Endothelial cell of umbilical vein (primary cell): ENCODE measurements at regions of chr19 and their contacts with region 1.

Region 1: GRCh38 chr19:38004521-38005223 is 97.7 kb downstream of the SIPA1L3 start:
- DNase-seq: peak; percentile 97
- H3K4me3 ChIP-seq: peak overlapping the region in 2 of 3 experiments; percentile 6 to 44
- H3K27ac ChIP-seq: peak overlapping the region; percentile 99
- H3K4me1 ChIP-seq: peaks cover 46% of the 10 kb centered on the region
- H3K27me3 ChIP-seq: no peaks in the 10 kb centered on the region
- CTCF ChIP-seq: no peak
- POLR2A ChIP-seq: peak; percentile 96

Region 2: DNA sequence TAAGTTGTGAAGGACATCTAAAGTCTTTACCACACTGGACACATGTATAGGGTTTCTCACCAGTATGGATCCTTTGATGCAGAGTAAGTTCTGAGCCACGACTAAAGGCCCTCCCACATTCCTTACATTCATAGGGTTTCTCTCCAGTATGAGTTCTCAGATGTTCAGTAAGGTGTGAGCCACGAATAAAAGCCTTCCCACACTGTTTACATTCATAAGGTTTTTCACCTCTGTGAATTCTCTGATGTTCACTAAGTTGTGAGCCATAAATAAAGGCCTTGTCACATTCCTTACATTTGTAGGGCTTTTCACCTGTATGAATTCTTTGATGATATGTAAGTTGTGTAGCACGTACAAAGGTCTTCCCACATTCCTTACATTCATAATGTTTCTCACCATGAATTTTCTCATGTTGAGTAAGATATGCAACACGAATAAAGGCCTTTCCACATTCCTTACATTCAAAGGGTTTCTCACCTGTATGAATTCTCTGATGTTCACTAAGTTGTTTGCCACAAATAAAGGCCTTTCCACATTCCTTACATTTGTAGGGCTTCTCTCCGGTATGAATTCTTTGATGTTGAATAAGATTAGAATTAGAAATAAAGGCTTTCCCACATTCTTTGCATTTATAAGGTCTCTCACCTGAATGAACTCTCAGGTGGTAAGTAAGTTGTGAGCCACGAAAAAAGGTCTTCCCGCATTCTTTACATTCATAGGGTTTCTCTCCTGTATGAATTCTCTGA is 439.9 kb before region 1 on chr19:
- CTCF ChIA-PET with region 1: no interaction called
- POLR2A ChIA-PET with region 1: no interaction called
- dilution Hi-C with region 1: no loop called
- intact Hi-C with region 1: no loop called
- DNase-seq: peak; percentile 2
- H3K4me3 ChIP-seq: no peak overlapping the region
- H3K27ac ChIP-seq: no peak overlapping the region
- H3K4me1 ChIP-seq: no peaks in the 10 kb centered on the region
- H3K27me3 ChIP-seq: no peaks in the 10 kb centered on the region
- CTCF ChIP-seq: no peak
- POLR2A ChIP-seq: no peak

Region 3: DNA sequence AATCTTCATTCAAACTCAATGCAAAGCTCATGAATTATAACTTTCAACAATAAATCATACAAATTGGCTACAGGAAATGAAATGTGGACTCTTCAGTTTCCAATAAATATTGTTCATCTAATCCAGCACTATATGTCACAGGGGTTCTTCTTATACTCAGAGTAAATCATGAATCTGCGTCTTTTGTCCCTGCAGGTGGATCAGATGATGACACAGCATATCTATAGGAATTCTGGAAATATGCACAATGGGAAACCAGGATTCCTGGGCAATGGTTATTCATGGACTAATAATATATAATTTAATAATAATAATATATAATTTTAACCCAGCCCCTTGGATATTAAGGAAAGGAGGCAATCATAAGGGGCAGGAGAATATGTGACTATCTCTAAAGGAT is 233.7 kb before region 1 on chr19:
- CTCF ChIA-PET with region 1: no interaction called
- POLR2A ChIA-PET with region 1: no interaction called
- dilution Hi-C with region 1: no loop called
- intact Hi-C with region 1: no loop called
- DNase-seq: no peak
- H3K4me3 ChIP-seq: no peak overlapping the region
- H3K27ac ChIP-seq: no peak overlapping the region
- H3K4me1 ChIP-seq: no peaks in the 10 kb centered on the region
- H3K27me3 ChIP-seq: no peaks in the 10 kb centered on the region
- CTCF ChIP-seq: no peak
- POLR2A ChIP-seq: no peak

Region 4: DNA sequence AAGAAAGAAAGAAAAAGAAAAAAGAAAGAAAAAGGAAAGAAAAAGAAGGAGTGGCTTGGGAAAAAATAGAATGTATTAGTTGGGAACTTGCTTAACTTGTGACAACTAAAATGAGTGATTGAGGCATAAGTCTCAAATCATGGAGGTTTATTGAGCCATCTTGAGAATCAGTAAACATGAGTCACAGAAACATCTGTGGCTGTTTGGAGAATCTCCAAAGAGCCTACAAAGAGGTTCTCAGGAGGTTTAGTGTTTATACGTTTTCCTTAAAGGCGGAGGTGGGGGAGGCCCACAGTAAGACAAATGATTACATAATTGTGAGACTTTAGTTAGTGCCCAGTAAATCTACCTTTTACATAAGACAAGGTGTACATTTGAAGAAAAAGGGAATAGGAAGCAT is 136.8 kb before region 1 on chr19:
- CTCF ChIA-PET with region 1: no interaction called
- POLR2A ChIA-PET with region 1: no interaction called
- dilution Hi-C with region 1: no loop called
- intact Hi-C with region 1: no loop called
- DNase-seq: no peak
- H3K4me3 ChIP-seq: no peak overlapping the region
- H3K27ac ChIP-seq: no peak overlapping the region
- H3K4me1 ChIP-seq: no peaks in the 10 kb centered on the region
- H3K27me3 ChIP-seq: no peaks in the 10 kb centered on the region
- CTCF ChIP-seq: no peak
- POLR2A ChIP-seq: no peak

Region 5: DNA sequence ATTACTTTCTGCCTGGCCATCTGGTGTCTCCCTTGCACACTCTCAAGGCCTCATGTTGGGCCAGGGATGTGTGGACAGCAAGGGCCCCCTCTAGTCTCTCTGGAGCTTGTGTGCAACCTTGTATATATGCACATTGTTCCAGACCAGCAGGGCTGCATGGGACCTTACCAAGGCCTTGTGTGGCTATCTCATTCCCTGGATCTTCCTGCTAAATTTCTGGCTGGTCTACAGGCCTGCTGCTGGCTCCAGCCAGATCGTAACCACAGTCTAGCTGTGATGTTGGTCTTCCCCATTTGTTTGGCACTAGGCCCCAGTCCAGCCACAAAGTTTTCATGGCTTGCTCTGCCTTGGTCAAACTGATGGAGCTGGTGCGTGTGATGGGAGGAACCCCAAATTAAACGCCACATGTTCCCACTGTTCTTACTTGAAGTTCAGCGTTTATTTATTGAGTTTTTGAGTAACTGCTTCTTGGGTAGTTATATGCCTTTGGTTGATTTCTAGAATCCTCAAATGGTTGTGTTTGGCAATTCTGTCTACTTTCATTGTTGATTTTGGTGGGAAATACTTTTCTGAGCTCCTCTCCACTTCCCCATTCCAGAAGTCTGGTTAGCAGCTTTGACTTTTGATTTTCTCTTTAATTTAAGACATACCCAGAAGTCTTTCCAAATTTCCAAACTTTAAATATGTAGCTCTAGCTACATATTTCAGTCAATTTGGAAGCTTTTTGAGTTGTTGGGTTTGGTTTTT is 41.3 kb before region 1 on chr19:
- CTCF ChIA-PET with region 1: interaction called, 5 read pairs
- POLR2A ChIA-PET with region 1: interaction called, 7 read pairs
- dilution Hi-C with region 1: no loop called
- intact Hi-C with region 1: loop called (anchors 2 kb)
- DNase-seq: peak; percentile 29
- H3K4me3 ChIP-seq: no peak overlapping the region
- H3K27ac ChIP-seq: no peak overlapping the region
- H3K4me1 ChIP-seq: peaks cover 18% of the 10 kb centered on the region
- H3K27me3 ChIP-seq: no peaks in the 10 kb centered on the region
- CTCF ChIP-seq: no peak
- POLR2A ChIP-seq: no peak

Region 6: DNA sequence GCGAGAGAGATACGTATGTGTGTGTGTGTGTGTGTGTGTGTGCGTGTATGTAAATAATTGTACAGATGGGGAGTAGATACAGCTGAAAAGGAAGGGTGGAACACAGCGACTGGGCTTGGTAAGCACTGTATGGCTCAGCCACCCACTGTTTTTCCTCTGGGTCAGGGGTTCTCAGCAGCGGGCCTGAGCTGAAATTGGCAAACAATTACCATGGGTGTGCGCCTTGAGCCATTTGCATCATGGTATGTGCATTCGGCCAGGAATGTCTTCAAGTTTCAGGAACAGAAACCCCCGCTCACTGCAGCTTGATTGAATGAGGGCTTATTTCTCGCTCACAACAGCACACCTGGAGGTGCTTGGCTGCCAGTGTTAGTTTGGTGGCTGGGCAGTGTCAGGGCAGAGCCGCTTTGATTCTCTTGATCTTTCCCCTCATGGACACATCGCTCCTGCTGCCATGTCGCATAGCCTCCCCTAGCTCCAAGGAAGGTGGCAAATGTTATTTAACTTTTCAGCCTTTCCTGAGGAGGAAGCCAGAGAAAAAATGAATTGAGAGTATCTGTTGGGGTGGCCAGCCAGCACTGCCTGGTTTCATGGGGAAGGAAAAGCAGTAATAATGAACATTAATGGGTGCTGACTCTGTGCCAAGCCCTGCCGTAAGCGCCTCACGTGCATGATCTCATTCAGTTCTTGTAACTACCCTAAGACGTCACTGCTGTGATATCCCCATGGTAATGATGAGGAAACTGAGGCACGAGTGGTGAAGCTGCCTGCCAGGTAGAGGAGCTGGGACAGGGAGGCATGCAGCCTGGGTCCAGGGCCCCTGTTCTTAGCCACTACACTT is 29.2 kb after region 1 on chr19:
- CTCF ChIA-PET with region 1: interaction called, 3 read pairs
- POLR2A ChIA-PET with region 1: no interaction called
- dilution Hi-C with region 1: no loop called
- intact Hi-C with region 1: loop called (anchors 1 kb)
- DNase-seq: no peak
- H3K4me3 ChIP-seq: no peak overlapping the region
- H3K27ac ChIP-seq: no peak overlapping the region
- H3K4me1 ChIP-seq: peaks cover 12% of the 10 kb centered on the region
- H3K27me3 ChIP-seq: no peaks in the 10 kb centered on the region
- CTCF ChIP-seq: no peak
- POLR2A ChIP-seq: no peak

Region 7: GRCh38 chr19:38061294-38061693 is 56.6 kb after region 1 on chr19:
- CTCF ChIA-PET with region 1: interaction called, 5 read pairs
- POLR2A ChIA-PET with region 1: interaction called, 7 read pairs
- dilution Hi-C with region 1: no loop called
- intact Hi-C with region 1: loop called (anchors 1 kb)
- DNase-seq: no peak
- H3K4me3 ChIP-seq: no peak overlapping the region
- H3K27ac ChIP-seq: peak overlapping the region; percentile 42
- H3K4me1 ChIP-seq: peaks cover 22% of the 10 kb centered on the region
- H3K27me3 ChIP-seq: no peaks in the 10 kb centered on the region
- CTCF ChIP-seq: no peak
- POLR2A ChIP-seq: no peak

Region 8: DNA sequence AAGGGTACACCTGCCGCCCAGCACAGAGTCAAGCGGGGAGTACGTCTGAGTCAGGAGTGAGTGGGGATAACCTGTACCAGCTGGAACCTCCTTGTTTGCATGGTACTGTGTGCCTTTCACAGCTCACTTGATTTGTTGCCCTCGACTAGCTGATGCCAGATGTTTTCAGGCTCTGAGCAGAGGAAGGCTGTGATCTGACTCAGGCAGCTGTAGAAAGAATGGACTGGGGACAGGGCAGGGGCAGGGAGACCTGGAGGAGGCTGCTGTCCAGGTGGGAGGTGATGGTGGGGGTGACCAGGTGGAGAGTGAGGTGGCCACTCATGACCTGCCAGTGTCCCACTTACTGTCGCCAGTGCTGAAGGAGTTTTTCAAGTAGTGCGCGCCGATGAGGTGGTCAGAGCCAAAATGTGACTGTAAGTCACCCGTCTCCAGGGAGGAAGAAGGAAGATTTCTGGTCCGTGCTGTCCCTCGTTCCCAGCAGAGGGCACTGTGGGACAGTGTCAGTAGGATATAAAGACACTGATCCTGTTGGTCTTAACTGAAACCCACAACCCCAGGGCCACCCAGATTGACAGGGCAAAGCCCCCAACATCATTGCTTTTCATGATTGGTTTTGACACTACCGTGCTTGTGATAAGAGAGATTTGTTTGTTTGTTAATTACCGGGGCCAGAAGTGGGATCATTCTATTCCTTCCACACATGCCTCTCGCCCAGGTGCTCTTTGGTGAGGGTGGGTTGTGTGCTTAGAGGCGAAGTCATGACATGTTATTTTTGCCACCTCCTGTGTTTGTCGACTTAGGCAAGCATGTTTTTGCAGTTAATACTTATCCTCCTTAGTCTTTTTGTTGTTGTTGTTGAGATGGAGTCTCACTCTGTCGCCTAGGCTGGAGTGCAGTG is 91.0 kb after region 1 on chr19:
- CTCF ChIA-PET with region 1: interaction called, 14 read pairs
- POLR2A ChIA-PET with region 1: no interaction called
- dilution Hi-C with region 1: no loop called
- intact Hi-C with region 1: no loop called
- DNase-seq: peak; percentile 70
- H3K4me3 ChIP-seq: no peak overlapping the region
- H3K27ac ChIP-seq: no peak overlapping the region
- H3K4me1 ChIP-seq: no peaks in the 10 kb centered on the region
- H3K27me3 ChIP-seq: no peaks in the 10 kb centered on the region
- CTCF ChIP-seq: peak; percentile 71 to 76
- POLR2A ChIP-seq: no peak